MCF 10A (cell line): ENCODE measurements at regions of chr6 and their contacts with region 1.

Region 1: GRCh38 chr6:31952140-31952805 is 6.4 kb downstream of the CFB start:
- DNase-seq: peak; percentile 73
- H3K4me3 Mint-ChIP-seq: no peak overlapping the region
- H3K27ac Mint-ChIP-seq: peak overlapping the region; percentile 61
- H3K4me1 Mint-ChIP-seq: peaks cover 21% of the 10 kb centered on the region
- H3K27me3 Mint-ChIP-seq: no peaks in the 10 kb centered on the region
- CTCF ChIP-seq: peak; percentile 75

Region 2: GRCh38 chr6:31680840-31681671 is 271.2 kb before region 1 on chr6 and contains the start of gene LY6G5C:
- CTCF ChIA-PET with region 1: interaction called, 6 read pairs
- POLR2A ChIA-PET with region 1: no interaction called
- intact Hi-C with region 1: loop called (anchors 1 kb)
- DNase-seq: peak; percentile 81
- H3K4me3 Mint-ChIP-seq: peak within 1 kb of the TSS; percentile 73
- H3K27ac Mint-ChIP-seq: peak within 1 kb of the TSS; percentile 87
- H3K4me1 Mint-ChIP-seq: peaks cover 12% of the 10 kb centered on the region
- H3K27me3 Mint-ChIP-seq: peaks cover 18% of the 10 kb centered on the region
- CTCF ChIP-seq: peak; percentile 84
- total RNA-seq, gene LY6G5C: 0.64 and 1.4 TPM in 2 replicates

Region 3: DNA sequence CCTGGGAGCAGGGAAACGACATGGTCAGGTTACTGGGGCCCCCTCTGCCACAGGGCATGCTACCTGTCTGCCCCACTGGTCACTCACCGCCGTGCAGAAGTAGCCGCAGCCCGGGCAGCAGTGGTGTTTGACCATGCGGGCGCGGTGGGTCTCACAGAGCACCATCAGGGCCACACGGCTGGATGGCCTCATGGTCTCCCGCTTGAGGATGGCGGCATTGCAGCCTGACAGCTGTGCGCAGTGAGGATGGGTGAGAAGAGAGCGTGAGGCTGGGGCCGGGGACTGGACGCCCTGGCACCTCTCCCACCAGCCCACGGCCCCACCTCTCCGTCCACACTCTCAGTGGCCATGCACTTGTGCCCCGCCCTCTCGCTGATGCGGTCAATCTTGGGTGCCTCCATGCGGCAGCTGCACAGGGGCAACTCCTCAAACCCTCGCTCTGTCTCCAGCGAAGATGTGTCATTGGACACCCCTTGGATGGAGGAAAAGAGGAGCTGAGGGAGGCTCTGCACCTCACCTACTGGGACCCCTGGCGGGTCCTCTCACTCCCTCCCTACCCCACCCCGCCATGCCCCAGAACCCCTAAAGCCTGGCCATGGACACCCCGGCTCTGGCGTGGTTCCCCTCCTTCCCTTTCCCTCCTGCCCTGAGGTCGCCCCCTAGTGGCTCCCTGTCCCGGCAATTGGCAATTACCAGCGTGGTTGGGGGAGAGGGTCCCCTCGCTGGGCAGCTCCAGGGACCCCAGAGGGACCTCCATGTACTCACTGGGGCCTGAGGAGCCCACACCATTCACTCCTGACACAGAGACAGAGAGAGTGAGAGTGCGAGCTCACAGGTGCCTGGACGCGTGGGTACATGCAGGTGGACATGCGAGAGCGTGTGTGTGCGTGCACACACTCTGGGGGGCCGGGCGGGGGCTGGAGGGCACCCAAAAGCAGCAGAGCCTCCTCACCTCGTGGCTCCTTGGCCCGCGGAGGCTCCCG is 63.7 kb before region 1 on chr6:
- CTCF ChIA-PET with region 1: interaction called, 20 read pairs
- POLR2A ChIA-PET with region 1: interaction called, 3 read pairs
- intact Hi-C with region 1: no loop called
- DNase-seq: peak; percentile 34
- H3K4me3 Mint-ChIP-seq: no peak overlapping the region
- H3K27ac Mint-ChIP-seq: no peak overlapping the region
- H3K4me1 Mint-ChIP-seq: no peaks in the 10 kb centered on the region
- H3K27me3 Mint-ChIP-seq: no peaks in the 10 kb centered on the region
- CTCF ChIP-seq: peak; percentile 73

Region 4: DNA sequence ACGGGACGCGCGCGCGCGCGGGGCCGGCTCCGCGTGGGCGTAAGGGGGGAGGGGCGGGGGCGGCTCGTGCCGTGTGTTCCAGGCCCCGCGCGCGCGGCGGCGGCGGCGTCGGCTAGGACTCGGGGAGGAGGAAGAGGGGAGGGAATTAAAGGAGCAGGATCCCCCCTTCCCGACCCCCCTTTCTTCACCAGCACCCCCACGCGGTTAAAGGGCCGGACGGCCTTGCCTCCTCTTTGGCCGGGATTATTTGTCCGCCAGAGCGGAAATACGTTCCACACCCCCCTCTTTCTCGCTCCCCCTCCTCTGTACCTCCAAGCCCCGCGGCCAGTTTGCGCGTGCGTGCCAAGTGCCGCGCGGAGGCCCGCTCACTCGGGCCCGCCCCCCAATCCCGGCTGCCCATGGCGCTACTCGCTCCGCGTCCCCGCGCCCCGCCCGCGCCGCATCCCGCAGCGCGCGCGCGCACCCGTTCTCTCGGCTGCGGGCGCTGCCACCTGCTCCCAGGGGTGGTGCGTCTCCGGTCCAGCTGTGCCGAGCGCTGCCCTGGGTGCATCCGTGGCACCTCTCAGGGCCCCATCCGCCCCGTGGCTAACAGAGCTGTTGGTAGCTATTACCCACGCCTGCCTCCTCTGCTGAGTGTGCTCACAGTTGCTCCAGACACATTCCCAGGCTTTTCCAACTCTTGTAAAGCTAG is 50.2 kb before region 1 on chr6 and contains the start of gene ZBTB12:
- CTCF ChIA-PET with region 1: interaction called, 32 read pairs
- POLR2A ChIA-PET with region 1: interaction called, 41 read pairs
- intact Hi-C with region 1: loop called (anchors 1 kb)
- DNase-seq: peak; percentile 93
- H3K4me3 Mint-ChIP-seq: peak within 1 kb of the TSS; percentile 67
- H3K27ac Mint-ChIP-seq: peak within 1 kb of the TSS; percentile 33
- H3K4me1 Mint-ChIP-seq: peaks cover 24% of the 10 kb centered on the region
- H3K27me3 Mint-ChIP-seq: no peaks in the 10 kb centered on the region
- CTCF ChIP-seq: no peak
- total RNA-seq, gene ZBTB12: 3.6 and 4.0 TPM in 2 replicates

Region 5: DNA sequence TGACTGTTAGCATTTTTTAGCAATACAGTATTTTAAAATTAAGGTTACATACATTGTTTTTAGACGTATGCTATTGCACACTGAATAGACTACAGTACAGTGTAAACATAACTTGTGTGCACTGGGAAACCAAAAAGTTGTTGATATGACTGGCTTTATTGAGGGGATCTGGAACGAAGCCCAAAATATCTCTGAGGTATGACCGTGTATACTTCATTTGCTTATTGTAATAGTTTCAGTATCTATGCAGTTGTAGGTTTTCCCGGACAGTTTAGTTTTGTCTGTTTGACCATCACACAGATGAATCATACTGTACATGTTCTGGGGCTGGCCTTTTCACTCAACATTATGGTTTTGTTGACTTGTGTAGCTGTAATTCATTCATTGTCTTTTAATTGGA is 43.5 kb before region 1 on chr6:
- CTCF ChIA-PET with region 1: interaction called, 32 read pairs
- POLR2A ChIA-PET with region 1: interaction called, 23 read pairs
- intact Hi-C with region 1: no loop called
- DNase-seq: peak; percentile 40
- H3K4me3 Mint-ChIP-seq: no peak overlapping the region
- H3K27ac Mint-ChIP-seq: no peak overlapping the region
- H3K4me1 Mint-ChIP-seq: peaks cover 15% of the 10 kb centered on the region
- H3K27me3 Mint-ChIP-seq: no peaks in the 10 kb centered on the region
- CTCF ChIP-seq: no peak

Region 6: DNA sequence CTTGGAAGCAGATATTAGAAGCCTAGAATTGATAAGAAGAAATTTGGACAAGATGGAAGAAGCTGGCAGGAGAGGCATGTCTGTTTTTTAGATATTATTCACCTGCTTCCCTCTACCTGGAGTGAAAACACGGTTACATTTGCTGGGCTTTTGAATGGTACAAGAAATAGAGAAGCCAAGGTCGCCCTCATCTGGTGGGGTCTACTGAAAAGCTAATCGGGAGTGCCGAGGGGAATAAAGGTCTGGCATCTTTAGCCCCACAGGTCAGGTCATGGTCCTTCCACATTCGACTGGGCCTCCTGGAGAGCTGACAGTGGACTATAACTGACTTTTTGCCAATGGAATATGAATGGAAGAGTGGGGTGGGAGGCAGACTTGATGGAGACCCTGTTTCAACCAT is 29.3 kb before region 1 on chr6:
- CTCF ChIA-PET with region 1: interaction called, 18 read pairs
- POLR2A ChIA-PET with region 1: interaction called, 3 read pairs
- intact Hi-C with region 1: no loop called
- DNase-seq: peak; percentile 40
- H3K4me3 Mint-ChIP-seq: no peak overlapping the region
- H3K27ac Mint-ChIP-seq: no peak overlapping the region
- H3K4me1 Mint-ChIP-seq: peaks cover 6% of the 10 kb centered on the region
- H3K27me3 Mint-ChIP-seq: no peaks in the 10 kb centered on the region
- CTCF ChIP-seq: no peak